Thyroid gland (tissue), 4 donors: ENCODE measurements at regions of chr17 and their contacts with region 1.

Region 1: DNA sequence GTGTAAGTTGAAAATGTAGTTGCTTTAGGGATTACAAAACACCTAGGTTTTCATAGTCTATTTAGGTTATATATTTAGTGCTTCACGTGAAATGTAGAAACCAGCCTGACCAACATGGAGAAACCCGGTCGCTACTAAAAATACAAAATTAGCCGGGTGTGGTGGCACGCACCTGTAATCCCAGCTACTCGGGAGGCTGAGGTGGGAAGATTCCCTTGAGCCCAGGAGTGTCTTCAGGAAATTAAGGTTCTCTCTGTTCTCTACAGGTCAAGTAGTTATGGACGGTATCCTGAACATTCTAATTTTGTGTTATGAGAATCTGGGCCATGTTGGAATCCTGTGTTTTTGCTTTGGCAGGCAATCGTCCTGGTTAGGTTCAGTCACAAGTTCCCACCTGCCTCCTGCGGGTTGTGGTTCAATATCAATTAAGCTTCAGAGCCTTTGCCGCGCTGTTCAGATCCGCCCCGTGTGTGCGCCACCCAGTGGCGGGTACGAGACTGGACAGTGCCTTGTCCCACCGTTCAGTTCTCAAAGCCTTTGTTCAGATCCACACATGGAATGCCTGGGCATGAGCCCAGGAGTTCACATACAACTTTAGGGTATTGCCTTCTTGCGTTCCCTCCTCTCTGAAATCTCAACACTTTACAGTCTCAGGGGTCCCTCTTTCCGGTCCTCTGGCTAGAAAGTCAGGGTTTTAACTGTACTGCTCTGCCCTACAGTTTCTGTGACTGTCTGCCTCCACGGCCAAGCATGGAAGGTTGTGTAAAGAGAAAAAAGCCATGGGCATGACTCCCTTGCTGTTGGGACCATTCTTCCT is 41.7 kb downstream of the HEATR6 start:
- DNase-seq: peak; percentile 59 to 61
- H3K4me3 ChIP-seq: no peak overlapping the region
- H3K27ac ChIP-seq: no peak overlapping the region
- H3K4me1 ChIP-seq: no peaks in the 10 kb centered on the region
- H3K27me3 ChIP-seq: no peaks in the 10 kb centered on the region
- CTCF ChIP-seq: peak; percentile 57 to 88 (median 65)
- POLR2A ChIP-seq: no peak

Region 2: DNA sequence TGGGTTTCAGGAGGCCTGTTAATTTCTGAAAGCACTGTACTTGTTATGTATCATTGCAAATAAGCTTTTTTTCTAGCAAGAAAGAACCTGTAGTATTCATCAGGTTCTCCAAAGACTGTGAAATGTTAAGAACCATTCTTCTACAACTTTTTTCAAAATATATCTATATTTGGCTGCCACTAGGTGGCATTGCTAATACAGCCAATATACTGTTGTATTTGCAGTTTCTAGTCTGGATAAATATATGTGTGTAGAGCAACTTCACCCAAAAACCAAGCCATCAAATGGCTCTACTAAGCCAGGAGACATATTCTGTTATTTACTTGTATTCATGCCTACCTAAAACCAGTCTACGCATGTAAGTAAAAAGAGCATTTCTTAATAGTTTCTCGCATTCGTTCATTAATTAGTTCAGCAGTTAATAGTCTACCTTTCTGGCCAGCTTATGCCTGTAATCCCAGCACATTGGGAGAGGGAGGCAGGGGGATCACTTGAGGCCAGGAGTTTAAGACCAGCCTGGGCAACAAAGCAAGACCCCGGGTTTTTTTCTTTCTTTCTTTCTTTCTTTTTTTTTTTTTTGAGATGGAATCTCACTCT is 290.1 kb before region 1 on chr17:
- intact Hi-C with region 1: loop called (anchors 5 kb)
- DNase-seq: no peak
- H3K4me3 ChIP-seq: no peak overlapping the region
- H3K27ac ChIP-seq: no peak overlapping the region
- H3K4me1 ChIP-seq: no peaks in the 10 kb centered on the region
- H3K27me3 ChIP-seq: no peaks in the 10 kb centered on the region
- CTCF ChIP-seq: peak; percentile 29 to 64 (median 58)
- POLR2A ChIP-seq: no peak